Mammary epithelial cell (primary cell): ENCODE measurements at regions of chr12 and their contacts with region 1.

Region 1: GRCh38 chr12:132189378-132190011 is 45.2 kb downstream of the NOC4L start:
- DNase-seq: peak; percentile 88
- H3K4me3 ChIP-seq: peak overlapping the region; percentile 44 to 61 (median 57)
- H3K27ac ChIP-seq: no peak overlapping the region
- H3K4me1 ChIP-seq: peaks cover 12% of the 10 kb centered on the region
- H3K27me3 ChIP-seq: no peaks in the 10 kb centered on the region
- CTCF ChIP-seq: no peak

Region 2: GRCh38 chr12:131773582-131774221 is 415.8 kb before region 1 on chr12:
- CTCF ChIA-PET with region 1: no interaction called
- dilution Hi-C with region 1: no loop called
- in situ Hi-C with region 1: no loop called
- intact Hi-C with region 1: no loop called
- DNase-seq: no peak
- H3K4me3 ChIP-seq: no peak overlapping the region
- H3K27ac ChIP-seq: no peak overlapping the region
- H3K4me1 ChIP-seq: peaks cover 9% of the 10 kb centered on the region
- H3K27me3 ChIP-seq: no peaks in the 10 kb centered on the region
- CTCF ChIP-seq: no peak

Region 3: DNA sequence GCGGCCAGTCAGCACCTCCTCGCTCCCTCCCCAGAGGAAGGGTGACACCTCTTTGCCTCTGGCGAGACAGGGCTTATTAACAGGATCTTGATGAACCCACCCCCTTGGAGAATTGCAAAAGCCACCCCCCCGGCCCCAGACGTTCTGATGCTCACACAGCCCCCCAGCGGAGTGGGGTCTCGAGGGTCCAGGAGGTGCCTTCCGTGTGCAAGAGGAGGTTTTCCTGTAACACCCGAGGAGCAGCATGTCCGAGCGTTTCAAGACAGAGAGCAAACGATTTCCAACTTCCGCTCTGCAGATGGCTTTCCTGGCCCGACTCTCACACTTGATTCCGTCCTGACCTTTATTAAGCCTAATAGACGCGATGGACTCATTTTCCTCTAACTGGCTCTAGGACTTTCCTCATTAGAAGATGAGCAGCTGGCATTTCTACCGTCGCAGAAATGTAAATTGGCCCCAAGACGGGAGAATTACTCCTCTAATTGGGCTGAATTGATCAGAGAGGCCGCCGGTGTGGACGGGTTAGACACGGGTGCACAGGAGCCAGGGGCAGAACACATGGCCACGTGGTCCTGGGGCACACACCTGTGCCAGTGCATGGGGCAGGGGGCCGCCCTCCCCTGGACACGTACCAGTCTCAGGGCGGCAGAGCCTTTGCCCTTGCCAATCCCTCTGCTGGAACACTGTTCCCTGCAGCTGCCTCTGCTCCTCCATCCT is 39.1 kb after region 1 on chr12:
- CTCF ChIA-PET with region 1: no interaction called
- dilution Hi-C with region 1: loop called (anchors 5 kb)
- in situ Hi-C with region 1: no loop called
- intact Hi-C with region 1: no loop called
- DNase-seq: no peak
- H3K4me3 ChIP-seq: no peak overlapping the region
- H3K27ac ChIP-seq: no peak overlapping the region
- H3K4me1 ChIP-seq: no peaks in the 10 kb centered on the region
- H3K27me3 ChIP-seq: peaks cover 10% of the 10 kb centered on the region
- CTCF ChIP-seq: no peak

Region 4: GRCh38 chr12:132275110-132275531 is 85.6 kb after region 1 on chr12:
- CTCF ChIA-PET with region 1: no interaction called
- dilution Hi-C with region 1: no loop called
- in situ Hi-C with region 1: no loop called
- intact Hi-C with region 1: loop called (anchors 10 kb)
- DNase-seq: no peak
- H3K4me3 ChIP-seq: no peak overlapping the region
- H3K27ac ChIP-seq: no peak overlapping the region
- H3K4me1 ChIP-seq: no peaks in the 10 kb centered on the region
- H3K27me3 ChIP-seq: peaks cover 2% of the 10 kb centered on the region
- CTCF ChIP-seq: no peak